HEK293 (cell line): ENCODE measurements at regions of chr5 and their contacts with region 1.

Region 1: GRCh38 chr5:52948418-52949076 is 40.6 kb upstream of the ITGA2 start:
- H3K4me3 ChIP-seq: no peak overlapping the region
- H3K27ac ChIP-seq: no peak overlapping the region
- H3K4me1 ChIP-seq: no peaks in the 10 kb centered on the region
- CTCF ChIP-seq: no peak

Region 2: GRCh38 chr5:52938226-52938625 is 10.3 kb before region 1 on chr5:
- CTCF ChIA-PET with region 1: interaction called, 11 read pairs
- POLR2A ChIA-PET with region 1: no interaction called
- H3K4me3 ChIP-seq: no peak overlapping the region
- H3K27ac ChIP-seq: no peak overlapping the region
- H3K4me1 ChIP-seq: no peaks in the 10 kb centered on the region
- CTCF ChIP-seq: no peak

Region 3: DNA sequence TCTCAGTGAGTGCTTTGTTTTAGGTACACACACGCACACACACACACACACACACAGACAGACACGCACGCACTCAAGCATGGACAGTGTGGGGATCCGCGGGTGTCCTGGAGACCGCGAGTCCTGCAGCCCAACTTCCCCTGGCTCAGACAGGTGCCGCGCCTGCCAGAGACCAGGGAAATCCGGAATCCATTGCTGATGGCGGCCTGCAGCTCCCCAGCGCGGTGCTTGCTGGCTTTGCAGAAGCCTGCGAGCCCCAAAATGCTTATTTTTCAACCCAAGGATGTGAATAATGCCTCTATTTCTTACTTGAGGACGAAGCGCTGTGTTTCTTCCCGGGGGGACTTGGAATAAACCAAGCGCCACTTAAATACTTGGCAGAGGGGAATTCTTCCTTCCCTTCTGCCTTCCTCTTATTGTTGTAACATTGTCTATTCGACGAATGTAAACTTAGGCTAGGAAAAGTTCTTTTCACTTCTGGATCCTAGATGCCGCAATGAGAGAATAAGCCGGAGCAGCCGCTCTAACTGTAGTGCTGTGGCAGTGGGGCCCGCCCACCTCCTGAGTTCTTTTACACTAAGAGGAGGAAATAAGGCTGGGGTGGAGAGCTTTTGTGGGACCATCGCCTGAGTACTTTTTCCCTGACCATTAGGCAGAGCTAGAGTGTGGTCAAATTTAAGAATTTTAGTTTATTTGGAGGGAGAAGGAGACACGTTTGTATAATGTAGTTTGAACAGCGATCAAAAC is 41.4 kb after region 1 on chr5:
- CTCF ChIA-PET with region 1: interaction called, 44 read pairs
- POLR2A ChIA-PET with region 1: interaction called, 6 read pairs
- H3K4me3 ChIP-seq: peak overlapping the region; percentile 77
- H3K27ac ChIP-seq: peak overlapping the region; percentile 77
- H3K4me1 ChIP-seq: no peaks in the 10 kb centered on the region; the same call in 1 of the 2 replicates
- CTCF ChIP-seq: peak; percentile 64

Region 4: DNA sequence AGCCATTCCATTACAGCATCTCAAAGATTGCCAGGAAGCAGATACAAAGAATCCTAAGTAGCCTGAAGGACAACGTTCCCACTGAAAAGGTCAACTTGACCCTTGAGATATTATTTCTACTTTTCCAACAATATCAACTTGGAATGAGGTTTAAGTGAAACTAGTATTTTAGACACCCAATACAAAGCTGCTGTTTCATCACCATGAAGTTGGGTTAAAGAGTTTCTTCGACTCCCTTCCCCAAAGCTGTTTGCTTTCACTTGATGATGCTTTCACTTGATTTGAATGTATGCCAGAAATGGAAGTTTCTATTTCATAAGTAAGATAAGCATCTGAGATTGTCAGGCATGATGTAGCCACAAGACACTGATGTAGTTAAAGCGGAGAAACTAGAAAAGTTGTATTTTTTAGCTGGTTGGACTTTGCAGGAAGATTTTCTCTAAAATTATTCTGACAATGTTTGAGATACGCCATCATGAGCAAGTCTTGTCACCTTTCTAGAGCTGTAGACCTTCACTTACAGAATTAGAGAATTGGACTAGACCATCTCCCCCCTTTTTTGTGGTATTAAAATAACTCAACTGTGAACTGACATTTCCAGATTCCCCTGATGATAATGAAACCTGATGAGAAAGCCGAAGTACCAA is 140.9 kb after region 1 on chr5:
- CTCF ChIA-PET with region 1: interaction called, 145 read pairs
- POLR2A ChIA-PET with region 1: interaction called, 3 read pairs
- H3K4me3 ChIP-seq: no peak overlapping the region
- H3K27ac ChIP-seq: no peak overlapping the region
- H3K4me1 ChIP-seq: no peaks in the 10 kb centered on the region
- CTCF ChIP-seq: no peak

Region 5: DNA sequence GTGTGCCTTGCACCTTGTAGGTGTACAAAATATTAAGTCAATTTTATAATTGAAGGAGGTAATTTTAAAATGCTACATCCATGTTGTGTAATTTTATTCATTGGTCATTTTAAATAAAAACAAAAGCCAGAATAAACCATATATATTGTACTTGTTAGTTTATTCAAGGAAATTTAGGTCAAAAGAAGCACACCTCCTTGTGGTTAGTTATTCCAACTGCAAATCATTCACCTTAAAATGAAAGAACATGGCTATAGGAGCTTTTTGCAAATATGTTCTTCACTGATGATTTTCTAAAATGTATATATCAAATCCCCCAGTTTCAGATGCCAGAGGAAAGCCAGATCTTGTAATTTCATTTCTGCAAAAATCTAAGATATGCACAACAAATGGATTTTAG is 166.4 kb after region 1 on chr5:
- CTCF ChIA-PET with region 1: interaction called, 14 read pairs
- POLR2A ChIA-PET with region 1: interaction called, 3 read pairs
- H3K4me3 ChIP-seq: no peak overlapping the region
- H3K27ac ChIP-seq: no peak overlapping the region
- H3K4me1 ChIP-seq: 0 out of 2 replicates have a peak, but pooled peaks cover 4% of the 10 kb centered on the region
- CTCF ChIP-seq: no peak